Right lobe of liver (tissue), 6 donors: ENCODE measurements at regions of chr4 and their contacts with region 1.

Region 1: DNA sequence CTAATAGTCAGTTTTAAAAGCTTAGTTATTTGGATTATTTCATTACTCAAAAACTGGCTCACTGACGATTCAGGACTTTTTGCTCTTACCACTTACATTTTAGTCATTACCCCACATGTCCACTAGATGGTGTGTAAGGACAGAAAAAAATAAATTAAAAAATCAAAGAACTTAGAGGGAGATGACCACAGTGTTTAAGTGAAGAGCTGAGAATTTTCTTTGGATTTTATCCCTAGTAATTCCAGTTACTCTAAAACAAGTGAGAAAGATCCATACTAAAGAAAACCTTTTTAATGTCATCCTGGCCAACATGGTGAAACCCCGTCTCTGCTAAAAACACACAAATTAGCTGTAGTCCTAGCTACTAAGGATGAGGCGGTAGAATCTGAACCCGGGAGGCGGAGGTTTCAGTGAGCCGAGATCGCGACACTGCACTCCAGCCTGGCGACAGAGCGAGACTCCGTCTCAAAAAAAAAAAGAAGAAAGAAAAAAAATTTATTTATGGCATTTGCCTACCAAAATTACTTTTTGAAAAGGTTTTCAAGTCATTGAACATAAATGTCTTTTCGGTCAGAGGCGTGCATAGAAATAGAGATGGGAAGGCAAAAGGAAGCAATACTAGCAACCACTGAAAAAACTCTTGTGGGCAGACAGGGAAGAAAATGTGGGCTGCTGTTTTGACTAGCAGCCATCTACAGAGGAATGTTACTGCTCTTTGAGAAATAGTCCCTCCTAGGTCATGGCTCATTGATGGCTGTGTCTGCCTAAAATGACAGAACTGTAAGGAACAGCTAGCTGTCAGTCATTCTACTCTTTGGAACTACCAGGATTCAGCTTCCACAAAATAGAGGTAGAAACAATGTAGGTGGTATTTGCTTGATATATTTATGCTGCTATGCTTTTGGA is 26.6 kb upstream of the TMPRSS11B start:
- DNase-seq: no peak
- ATAC-seq: peak; percentile 84 to 95 (median 90)
- H3K4me3 ChIP-seq: peak overlapping the region in 2 of 3 donors; percentile 5 to 9
- H3K27ac ChIP-seq: no peak overlapping the region
- H3K4me1 ChIP-seq: no peaks in the 10 kb centered on the region
- H3K27me3 ChIP-seq: no peaks in the 10 kb centered on the region
- CTCF ChIP-seq: peak; percentile 69 to 87 (median 72)
- POLR2A ChIP-seq: no peak

Region 2: GRCh38 chr4:68368691-68369480 is 96.8 kb after region 1 on chr4:
- intact Hi-C with region 1: loop called (anchors 5 to 10 kb)
- DNase-seq: no peak
- ATAC-seq: no peak
- H3K4me3 ChIP-seq: no peak overlapping the region
- H3K27ac ChIP-seq: no peak overlapping the region
- H3K4me1 ChIP-seq: no peaks in the 10 kb centered on the region
- H3K27me3 ChIP-seq: no peaks in the 10 kb centered on the region
- CTCF ChIP-seq: no peak
- POLR2A ChIP-seq: no peak

Region 3: DNA sequence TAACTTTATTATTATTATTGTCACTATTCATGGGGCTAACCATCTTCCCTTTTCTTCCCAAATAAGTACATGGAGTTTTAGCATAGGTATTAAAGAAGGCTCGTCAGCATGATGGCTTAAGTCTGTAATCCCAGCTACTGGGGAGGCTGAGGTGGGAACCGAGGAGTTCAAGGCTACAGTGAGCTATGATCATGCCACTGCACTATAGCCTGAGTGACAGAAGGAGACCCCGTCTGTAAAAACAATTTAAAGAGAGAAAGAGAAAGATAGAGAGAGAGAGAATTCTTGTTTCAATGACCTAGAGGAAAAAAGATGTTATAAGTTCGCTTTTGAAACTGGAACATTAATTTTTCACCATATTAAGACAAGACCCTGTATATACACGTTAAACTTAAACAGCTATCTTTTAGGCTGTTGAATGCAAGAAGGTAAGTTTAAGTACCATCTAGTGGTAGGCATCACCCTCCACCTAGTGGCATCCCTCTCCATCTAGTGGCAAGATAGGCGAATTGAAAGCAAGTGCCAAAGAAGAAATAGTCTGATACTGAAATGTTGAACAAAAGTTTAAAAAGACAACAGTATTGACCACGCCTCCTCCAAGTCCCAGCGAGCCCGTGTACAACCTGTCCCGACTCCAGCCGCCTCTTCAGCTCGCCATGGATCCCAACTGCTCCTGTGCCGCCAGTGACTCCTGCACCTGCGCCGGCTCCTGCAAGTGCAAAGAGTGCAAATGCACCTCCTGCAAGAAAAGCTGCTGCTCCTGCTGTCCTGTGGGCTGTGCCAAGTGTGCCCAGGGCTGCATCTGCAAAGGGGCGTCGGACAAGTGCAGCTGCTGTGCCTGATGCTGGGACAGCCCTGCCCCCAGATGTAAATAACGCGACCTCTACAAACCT is 103.8 kb after region 1 on chr4:
- intact Hi-C with region 1: loop called in 1 of 2 experiments (anchors 10 kb)
- DNase-seq: peak; percentile 36 to 60 (median 47)
- ATAC-seq: peak; percentile 93 to 95 (median 95)
- H3K4me3 ChIP-seq: no peak overlapping the region
- H3K27ac ChIP-seq: no peak overlapping the region
- H3K4me1 ChIP-seq: no peaks in the 10 kb centered on the region
- H3K27me3 ChIP-seq: no peaks in the 10 kb centered on the region
- CTCF ChIP-seq: peak; percentile 73 to 87 (median 81)
- POLR2A ChIP-seq: no peak